Body of pancreas (tissue), 4 donors: ENCODE measurements at regions of chr1 and their contacts with region 1.

Region 1: GRCh38 chr1:173954179-173954578 is 37.1 kb upstream of the SERPINC1 start:
- DNase-seq: no peak
- ATAC-seq: no peak
- H3K4me3 ChIP-seq: no peak overlapping the region
- H3K27ac ChIP-seq: no peak overlapping the region
- H3K4me1 ChIP-seq: no peaks in the 10 kb centered on the region
- H3K27me3 ChIP-seq: no peaks in the 10 kb centered on the region
- CTCF ChIP-seq: no peak
- POLR2A ChIP-seq: no peak

Region 2: DNA sequence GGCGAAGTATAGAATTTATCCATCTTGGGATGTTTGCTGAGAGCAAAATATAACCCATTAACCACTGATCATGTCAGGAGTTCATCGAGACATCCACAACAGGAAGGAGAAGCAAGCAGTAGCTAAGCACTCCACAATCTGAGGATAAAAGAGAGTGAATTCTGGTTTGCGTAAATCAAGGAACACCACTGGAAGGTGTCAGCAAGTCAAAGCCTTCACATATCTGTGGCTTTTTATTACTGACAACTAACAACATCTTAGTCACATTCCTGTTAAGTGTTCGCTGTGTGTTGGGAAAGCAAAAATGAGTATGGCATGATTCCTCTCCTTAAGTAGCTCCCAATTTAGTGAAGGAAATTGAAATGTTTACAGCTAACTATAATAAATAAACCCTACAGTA is 174.2 kb before region 1 on chr1:
- intact Hi-C with region 1: no loop called
- DNase-seq: no peak
- ATAC-seq: no peak
- H3K4me3 ChIP-seq: no peak overlapping the region
- H3K27ac ChIP-seq: no peak overlapping the region
- H3K4me1 ChIP-seq: no peaks in the 10 kb centered on the region
- H3K27me3 ChIP-seq: no peaks in the 10 kb centered on the region
- CTCF ChIP-seq: no peak
- POLR2A ChIP-seq: no peak

Region 3: DNA sequence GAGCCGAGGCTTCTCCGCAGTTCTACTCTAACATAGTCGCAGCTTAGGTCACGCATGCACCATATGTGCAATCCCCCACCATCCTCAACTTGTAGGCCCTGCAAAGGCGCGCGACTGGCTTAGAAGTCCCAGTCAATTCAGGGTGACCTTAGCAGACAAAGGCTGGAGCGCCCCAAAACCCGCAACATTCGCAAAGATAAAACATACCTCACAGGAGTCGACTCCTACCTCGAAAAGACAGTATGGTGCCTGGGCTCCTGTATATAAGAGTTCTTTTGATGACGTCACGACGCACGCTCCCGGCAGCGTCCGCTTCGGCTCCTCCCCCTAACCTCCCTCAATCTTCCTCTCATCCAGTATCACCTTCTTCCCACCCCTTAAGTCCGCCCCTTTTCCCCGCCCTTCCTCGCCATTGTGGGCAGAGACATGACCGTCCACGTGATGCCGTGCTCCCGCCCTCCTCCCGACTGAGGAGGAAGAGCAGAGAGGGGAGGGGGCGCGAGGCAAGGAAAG is 86.4 kb before region 1 on chr1 and contains the start of gene GAS5:
- intact Hi-C with region 1: loop called (anchors 10 kb)
- DNase-seq: peak; percentile 99 to 100 (median 100)
- ATAC-seq: peak; percentile 90
- H3K4me3 ChIP-seq: peak within 1 kb of the TSS; percentile 77 to 88
- H3K27ac ChIP-seq: peak within 1 kb of the TSS; percentile 91 to 98 (median 97)
- H3K4me1 ChIP-seq: peaks cover 61% of the 10 kb centered on the region
- H3K27me3 ChIP-seq: no peaks in the 10 kb centered on the region
- CTCF ChIP-seq: peak in 2 of 7 experiments; percentile 5 to 15
- POLR2A ChIP-seq: peak; percentile 95 to 100 (median 100)
- total RNA-seq, gene GAS5: 413 to 570 TPM

Region 4: GRCh38 chr1:174074757-174075156 is 120.6 kb after region 1 on chr1:
- intact Hi-C with region 1: no loop called
- DNase-seq: no peak
- ATAC-seq: no peak
- H3K4me3 ChIP-seq: no peak overlapping the region
- H3K27ac ChIP-seq: no peak overlapping the region
- H3K4me1 ChIP-seq: no peaks in the 10 kb centered on the region
- H3K27me3 ChIP-seq: no peaks in the 10 kb centered on the region
- CTCF ChIP-seq: peak in 5 of 7 experiments; percentile 23 to 48 (median 42)
- POLR2A ChIP-seq: no peak